Activated T-helper 1 cell treated with anti-CD3 and anti-CD28 coated beads, Interleukin-12 subunit alpha, Interleukin-12 subunit beta, Interleukin-2, Interleukin-4 antibody, amounts not matched to agents 30 ng/mL and 10 ng/mL and 1 ng/mL, durations not matched to agents 14 hours and 24 hours and 36 hours (primary cell): ENCODE measurements at regions of chr19 and their contacts with region 1.

Region 1: DNA sequence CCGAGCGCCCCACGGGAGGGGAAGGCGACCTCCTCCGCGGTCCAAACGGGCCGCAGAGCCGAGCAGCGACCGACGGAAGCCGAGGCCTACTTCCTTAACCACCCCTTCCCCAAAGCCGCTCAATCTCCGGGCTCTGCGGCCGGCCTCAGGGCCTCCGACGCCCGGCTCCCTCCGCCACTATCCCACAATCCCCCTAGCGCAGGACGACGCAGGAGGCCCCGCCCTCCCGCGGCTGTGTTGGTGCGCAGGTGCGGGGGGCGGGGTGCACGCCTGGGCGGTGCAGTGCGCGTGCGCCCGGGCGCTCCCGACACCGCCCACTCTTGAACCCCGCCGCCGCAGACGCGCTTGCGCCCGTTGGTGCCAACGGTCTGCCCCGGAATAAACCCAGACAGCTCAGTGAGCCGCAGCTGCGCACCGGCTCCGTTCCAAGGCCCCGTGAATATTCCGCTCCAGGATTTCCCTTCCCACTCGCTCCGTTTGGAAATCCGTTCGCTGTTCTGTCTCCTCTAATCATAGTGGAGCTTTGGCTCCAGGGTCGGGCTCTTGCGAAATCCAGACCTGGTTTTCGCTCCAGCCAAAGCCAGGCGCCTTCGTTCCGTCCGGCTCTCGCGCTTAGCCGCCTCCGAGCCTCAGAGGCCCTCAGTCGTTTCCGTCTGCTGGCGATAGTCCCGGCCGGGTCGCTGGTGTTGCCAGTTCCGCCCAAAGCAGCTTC is at the start of gene PPP6R1:
- DNase-seq: peak; percentile 93
- H3K4me3 Mint-ChIP-seq: peak within 1 kb of the TSS; percentile 96
- H3K27ac Mint-ChIP-seq: peak within 1 kb of the TSS; percentile 98
- H3K4me1 Mint-ChIP-seq: peaks cover 46% of the 10 kb centered on the region
- H3K27me3 Mint-ChIP-seq: no peaks in the 10 kb centered on the region
- total RNA-seq, gene PPP6R1: 200 and 202 TPM in 2 replicates

Region 2: DNA sequence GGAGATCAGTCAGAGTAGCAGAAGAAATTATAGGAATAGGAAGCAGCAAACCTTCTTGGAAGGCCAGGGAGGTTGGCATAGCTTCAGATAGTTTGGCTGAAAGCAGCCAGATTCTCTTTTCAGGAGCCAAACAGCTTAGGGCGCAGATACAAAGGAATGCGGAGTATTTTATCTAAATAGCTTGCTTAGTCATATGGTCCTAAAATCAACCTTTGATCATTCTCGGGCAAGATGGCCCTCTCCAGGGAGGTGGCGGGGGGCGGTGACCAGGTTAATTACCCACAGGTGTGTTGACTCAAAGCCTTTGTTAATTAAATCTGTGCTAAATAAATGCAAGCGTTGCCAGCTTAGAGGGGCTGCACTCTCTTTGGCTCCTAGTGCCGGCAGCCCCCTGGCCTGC is 365.6 kb before region 1 on chr19:
- intact Hi-C with region 1: no loop called
- DNase-seq: no peak
- H3K4me3 Mint-ChIP-seq: no peak overlapping the region
- H3K27ac Mint-ChIP-seq: no peak overlapping the region
- H3K4me1 Mint-ChIP-seq: no peaks in the 10 kb centered on the region
- H3K27me3 Mint-ChIP-seq: no peaks in the 10 kb centered on the region

Region 3: DNA sequence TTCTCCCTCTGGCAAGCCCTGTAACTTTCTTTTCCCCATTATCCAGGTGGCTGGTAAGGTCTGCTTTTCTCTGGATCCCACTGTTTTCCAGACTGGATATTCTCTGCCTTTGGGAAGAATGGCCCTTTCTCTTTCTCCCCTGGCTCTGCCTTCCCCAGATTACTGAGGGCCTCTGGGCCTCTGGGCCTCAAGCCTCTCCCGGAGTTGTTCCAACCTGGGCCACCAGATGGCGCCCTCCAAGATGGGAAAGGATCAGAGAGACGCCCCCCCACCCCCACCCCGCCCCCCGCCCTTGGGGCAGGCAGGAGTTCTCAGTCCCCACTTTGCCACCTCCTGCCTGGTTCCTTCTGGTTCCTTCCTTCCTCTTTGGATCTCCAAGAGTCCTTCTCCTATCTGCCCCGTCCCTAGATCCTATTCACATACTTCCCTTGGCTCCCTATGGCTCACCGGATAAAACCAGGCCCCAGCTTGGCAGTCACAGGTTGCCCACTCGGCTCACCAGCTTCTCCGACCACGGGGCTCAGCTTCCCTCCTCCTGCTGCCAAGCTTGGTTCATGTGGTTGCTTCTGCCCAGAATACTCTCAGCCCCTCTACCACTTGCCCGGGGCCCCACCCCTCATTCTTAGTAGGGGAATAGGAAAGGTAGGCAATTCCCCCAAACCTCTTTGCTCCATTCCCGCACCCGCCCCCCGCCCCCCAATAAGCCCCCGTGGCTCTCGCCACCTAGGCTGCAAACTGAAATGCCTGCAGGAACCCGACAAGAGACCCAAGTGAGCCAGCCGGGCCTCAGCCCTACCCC is 170.2 kb before region 1 on chr19:
- intact Hi-C with region 1: loop called (anchors 10 kb)
- DNase-seq: peak; percentile 62
- H3K4me3 Mint-ChIP-seq: peak overlapping the region; percentile 49
- H3K27ac Mint-ChIP-seq: no peak overlapping the region
- H3K4me1 Mint-ChIP-seq: peaks cover 16% of the 10 kb centered on the region
- H3K27me3 Mint-ChIP-seq: peaks cover 29% of the 10 kb centered on the region

Region 4: DNA sequence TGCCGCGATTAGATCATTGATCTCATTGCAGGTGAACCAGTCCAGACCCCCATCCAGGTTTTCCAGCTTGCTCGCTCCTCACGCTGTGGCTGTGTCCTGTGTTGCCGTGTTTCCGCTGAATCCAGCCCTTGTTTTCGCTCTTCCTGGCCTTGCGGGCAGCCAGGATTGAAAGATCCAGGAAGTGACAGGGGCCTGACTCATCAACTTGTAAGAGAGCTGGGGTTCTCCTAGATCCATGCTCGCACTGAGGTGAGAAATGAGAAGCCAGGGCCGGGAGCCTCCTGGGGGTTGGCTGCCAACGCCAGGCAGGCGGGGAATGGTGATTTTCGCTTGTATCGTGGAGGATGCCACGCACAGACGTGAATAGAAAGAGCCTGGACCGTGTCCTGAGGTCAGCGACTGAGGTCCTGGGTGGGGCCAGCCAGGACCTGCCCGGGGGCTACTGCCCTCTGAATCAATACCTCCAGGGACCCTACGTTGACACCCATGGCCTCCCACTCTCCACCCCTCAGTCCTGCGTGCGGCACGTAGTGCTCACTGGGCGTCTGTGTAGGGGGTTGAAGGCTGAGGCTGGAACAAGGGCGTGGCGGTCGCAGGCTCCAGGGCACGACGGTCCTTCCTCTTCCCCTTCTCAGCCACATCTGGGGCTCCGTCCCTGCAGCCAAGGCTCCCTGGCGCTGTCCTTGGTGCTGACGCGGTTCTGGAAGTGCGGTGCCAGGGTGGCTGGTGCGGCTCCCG is 42.4 kb before region 1 on chr19:
- intact Hi-C with region 1: loop called (anchors 1 kb)
- DNase-seq: peak; percentile 31
- H3K4me3 Mint-ChIP-seq: peak overlapping the region; percentile 63
- H3K27ac Mint-ChIP-seq: peak overlapping the region; percentile 67
- H3K4me1 Mint-ChIP-seq: peaks cover 11% of the 10 kb centered on the region
- H3K27me3 Mint-ChIP-seq: peaks cover 11% of the 10 kb centered on the region

Region 5: GRCh38 chr19:55339048-55339888 is 80.3 kb after region 1 on chr19 and contains the start of gene KMT5C:
- intact Hi-C with region 1: loop called (anchors 1 kb)
- DNase-seq: peak; percentile 100
- H3K4me3 Mint-ChIP-seq: peak within 1 kb of the TSS; percentile 96
- H3K27ac Mint-ChIP-seq: peak within 1 kb of the TSS; percentile 99
- H3K4me1 Mint-ChIP-seq: peaks cover 14% of the 10 kb centered on the region
- H3K27me3 Mint-ChIP-seq: peaks cover 9% of the 10 kb centered on the region
- total RNA-seq, gene KMT5C: 29.1 and 29.9 TPM in 2 replicates

Region 6: DNA sequence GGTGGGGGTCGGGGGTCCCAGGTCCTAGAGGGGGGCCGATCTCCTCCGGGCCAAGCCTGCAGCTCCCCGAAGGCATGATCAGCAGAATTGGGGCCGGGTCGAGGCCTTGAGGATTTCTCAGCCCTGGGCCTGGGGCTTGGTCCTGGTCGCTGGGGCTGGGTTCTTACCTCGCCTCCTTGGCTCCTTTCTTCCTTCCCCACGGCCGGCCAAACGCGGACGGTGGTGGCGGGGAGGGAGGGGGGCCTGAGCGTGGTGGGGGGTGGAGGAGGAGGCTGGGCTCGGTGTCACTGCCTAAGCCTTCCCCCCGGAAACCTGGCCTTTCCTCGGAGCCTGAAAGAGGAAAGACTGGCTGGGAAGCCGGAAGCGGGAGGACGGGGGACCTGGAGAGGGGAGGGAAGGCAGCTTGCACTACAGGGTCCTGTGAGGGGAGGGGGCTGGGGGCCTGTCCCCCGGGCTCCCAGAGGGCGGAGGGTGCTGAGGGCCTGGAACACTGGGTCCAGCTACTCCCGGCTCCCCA is 321.7 kb after region 1 on chr19 and contains the start of gene ZNF579:
- intact Hi-C with region 1: loop called (anchors 5 kb)
- DNase-seq: peak; percentile 71
- H3K4me3 Mint-ChIP-seq: peak within 1 kb of the TSS; percentile 91
- H3K27ac Mint-ChIP-seq: peak within 1 kb of the TSS; percentile 83
- H3K4me1 Mint-ChIP-seq: peaks cover 26% of the 10 kb centered on the region
- H3K27me3 Mint-ChIP-seq: peaks cover 13% of the 10 kb centered on the region
- total RNA-seq, gene ZNF579: 10.2 and 11.7 TPM in 2 replicates

Region 7: GRCh38 chr19:55643348-55644176 is 384.6 kb after region 1 on chr19 and contains the start of gene ZNF581:
- intact Hi-C with region 1: loop called (anchors 5 kb)
- DNase-seq: peak; percentile 77
- H3K4me3 Mint-ChIP-seq: peak within 1 kb of the TSS; percentile 100
- H3K27ac Mint-ChIP-seq: peak within 1 kb of the TSS; percentile 99
- H3K4me1 Mint-ChIP-seq: peaks cover 43% of the 10 kb centered on the region
- H3K27me3 Mint-ChIP-seq: no peaks in the 10 kb centered on the region
- total RNA-seq, gene ZNF581: 35.6 and 36.4 TPM in 2 replicates